Mammary epithelial cell (primary cell): ENCODE measurements at regions of chr2 and their contacts with region 1.

Region 1: DNA sequence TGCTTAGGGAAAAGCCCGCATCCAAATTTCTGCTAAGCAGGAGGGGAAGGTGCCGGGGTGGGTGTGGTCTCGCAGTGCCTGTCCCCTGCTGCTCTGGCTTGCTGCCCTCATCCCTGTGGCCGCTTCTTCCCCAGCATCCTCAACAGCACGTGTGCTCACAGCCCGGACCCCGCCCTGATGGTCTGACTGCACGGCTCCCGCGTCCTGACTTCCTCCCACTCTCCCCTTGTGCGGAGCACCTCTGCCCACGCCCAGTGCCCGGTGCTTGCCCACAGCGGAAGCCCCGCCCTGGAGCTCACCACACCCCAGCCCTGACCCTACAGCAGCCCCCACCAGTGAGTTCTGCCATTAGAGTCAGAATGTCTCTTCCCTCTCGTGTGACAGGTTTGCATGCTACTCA is 277.9 kb downstream of the NDUFA10 start:
- DNase-seq: no peak
- H3K4me3 ChIP-seq: no peak overlapping the region
- H3K27ac ChIP-seq: no peak overlapping the region
- H3K4me1 ChIP-seq: no peaks in the 10 kb centered on the region
- H3K27me3 ChIP-seq: no peaks in the 10 kb centered on the region
- CTCF ChIP-seq: no peak

Region 2: DNA sequence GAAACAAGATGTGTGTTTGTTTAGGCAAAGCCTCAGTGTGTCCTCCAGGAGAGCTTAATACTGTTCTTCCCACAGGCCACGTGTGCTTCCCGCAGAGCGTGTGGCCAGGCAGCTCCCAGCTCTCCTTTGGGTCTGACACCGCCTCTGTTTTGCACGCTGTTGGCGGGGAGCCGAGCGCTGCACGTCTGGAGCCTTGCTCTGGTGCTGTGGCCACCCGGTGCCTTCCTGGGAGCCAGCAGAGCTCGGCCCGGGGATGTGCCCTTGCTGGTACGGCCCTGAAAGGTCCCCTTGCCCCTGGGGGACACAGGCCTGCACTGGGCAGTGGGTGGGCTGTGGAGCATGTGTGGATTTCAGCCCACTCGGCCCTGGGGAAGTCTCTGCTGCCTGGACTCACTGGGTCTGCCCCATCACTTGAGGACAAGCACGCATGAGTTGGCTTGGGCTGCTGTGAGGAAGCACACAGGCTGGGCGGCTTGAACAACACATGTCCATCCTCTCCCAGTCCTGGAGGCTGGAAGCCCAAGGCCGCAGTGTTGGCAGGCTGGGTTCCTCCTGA is 185.8 kb before region 1 on chr2:
- CTCF ChIA-PET with region 1: no interaction called
- dilution Hi-C with region 1: no loop called
- in situ Hi-C with region 1: no loop called
- intact Hi-C with region 1: no loop called
- DNase-seq: no peak
- H3K4me3 ChIP-seq: no peak overlapping the region
- H3K27ac ChIP-seq: no peak overlapping the region
- H3K4me1 ChIP-seq: no peaks in the 10 kb centered on the region
- H3K27me3 ChIP-seq: no peaks in the 10 kb centered on the region
- CTCF ChIP-seq: no peak

Region 3: GRCh38 chr2:239706367-239706766 is 40.9 kb before region 1 on chr2:
- CTCF ChIA-PET with region 1: no interaction called
- dilution Hi-C with region 1: no loop called
- in situ Hi-C with region 1: no loop called
- intact Hi-C with region 1: no loop called
- DNase-seq: no peak
- H3K4me3 ChIP-seq: no peak overlapping the region
- H3K27ac ChIP-seq: no peak overlapping the region
- H3K4me1 ChIP-seq: no peaks in the 10 kb centered on the region
- H3K27me3 ChIP-seq: no peaks in the 10 kb centered on the region
- CTCF ChIP-seq: no peak

Region 4: GRCh38 chr2:239763433-239764097 is 16.3 kb after region 1 on chr2:
- CTCF ChIA-PET with region 1: no interaction called
- dilution Hi-C with region 1: no loop called
- in situ Hi-C with region 1: no loop called
- intact Hi-C with region 1: no loop called
- DNase-seq: no peak
- H3K4me3 ChIP-seq: no peak overlapping the region
- H3K27ac ChIP-seq: no peak overlapping the region
- H3K4me1 ChIP-seq: no peaks in the 10 kb centered on the region
- H3K27me3 ChIP-seq: no peaks in the 10 kb centered on the region
- CTCF ChIP-seq: no peak

Region 5: DNA sequence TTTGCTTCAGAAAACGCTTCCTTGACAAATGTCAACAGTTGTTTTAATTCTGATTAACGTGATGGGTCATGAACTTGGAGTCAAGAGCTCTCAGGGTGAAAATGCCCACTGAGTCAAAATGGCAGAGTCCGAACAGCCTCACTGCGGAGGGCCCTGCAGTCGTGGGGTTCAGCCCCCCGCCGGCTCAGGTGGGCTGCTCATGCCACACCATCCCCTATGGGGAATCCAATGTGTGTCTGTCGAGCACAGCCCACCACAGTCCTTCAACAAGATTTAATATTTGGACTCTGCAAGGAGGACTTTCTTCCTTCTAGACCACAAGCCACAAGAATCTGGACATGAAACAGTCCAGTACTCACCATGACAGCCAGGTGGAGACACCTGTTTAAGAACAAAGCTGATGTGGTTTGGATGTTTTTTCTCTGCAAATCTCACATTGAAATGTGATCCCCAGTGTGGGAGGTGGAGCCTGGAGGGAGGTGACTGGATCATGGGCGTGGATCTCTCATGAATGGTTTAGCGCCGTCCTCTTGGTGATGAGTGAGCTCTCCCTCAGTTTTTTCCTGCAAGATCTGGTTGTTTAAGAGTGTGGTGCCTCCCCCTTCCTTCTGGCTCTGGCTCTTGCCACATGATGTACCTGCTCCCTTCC is 76.9 kb after region 1 on chr2:
- CTCF ChIA-PET with region 1: no interaction called
- dilution Hi-C with region 1: loop called (anchors 5 kb)
- in situ Hi-C with region 1: no loop called
- intact Hi-C with region 1: no loop called
- DNase-seq: peak; percentile 66
- H3K4me3 ChIP-seq: no peak overlapping the region
- H3K27ac ChIP-seq: no peak overlapping the region
- H3K4me1 ChIP-seq: no peaks in the 10 kb centered on the region
- H3K27me3 ChIP-seq: no peaks in the 10 kb centered on the region
- CTCF ChIP-seq: peak in 1 of 2 donors; percentile 23

Region 6: DNA sequence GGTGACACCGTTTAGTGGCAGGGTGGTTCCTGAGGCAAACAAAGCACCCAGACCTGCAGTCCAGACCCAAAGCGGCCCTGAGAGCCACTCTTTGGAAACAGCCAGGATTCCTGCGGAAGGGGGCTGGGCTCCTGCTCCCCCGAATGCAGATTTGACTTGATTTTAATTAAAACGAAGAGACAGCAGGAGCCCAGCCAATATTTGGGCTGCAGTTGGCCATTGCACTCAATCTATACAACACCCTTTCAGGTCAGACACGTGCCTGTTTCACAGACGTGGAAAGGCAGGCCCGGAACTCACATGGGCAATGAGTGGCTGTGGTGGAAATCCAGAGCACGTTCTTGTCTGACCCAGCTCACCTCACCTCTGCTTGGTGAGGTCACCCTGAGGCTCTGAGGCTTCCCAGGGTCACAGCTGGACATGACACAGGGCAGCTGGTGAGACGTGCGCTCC is 155.5 kb after region 1 on chr2:
- CTCF ChIA-PET with region 1: no interaction called
- dilution Hi-C with region 1: no loop called
- in situ Hi-C with region 1: no loop called
- intact Hi-C with region 1: no loop called
- DNase-seq: no peak
- H3K4me3 ChIP-seq: no peak overlapping the region
- H3K27ac ChIP-seq: no peak overlapping the region
- H3K4me1 ChIP-seq: no peaks in the 10 kb centered on the region
- H3K27me3 ChIP-seq: no peaks in the 10 kb centered on the region
- CTCF ChIP-seq: no peak